Activated CD4-positive, alpha-beta memory T cell treated with anti-CD3 and anti-CD28 coated beads for 36 hours (primary cell): ENCODE measurements at regions of chr1 and their contacts with region 1.

Region 1: DNA sequence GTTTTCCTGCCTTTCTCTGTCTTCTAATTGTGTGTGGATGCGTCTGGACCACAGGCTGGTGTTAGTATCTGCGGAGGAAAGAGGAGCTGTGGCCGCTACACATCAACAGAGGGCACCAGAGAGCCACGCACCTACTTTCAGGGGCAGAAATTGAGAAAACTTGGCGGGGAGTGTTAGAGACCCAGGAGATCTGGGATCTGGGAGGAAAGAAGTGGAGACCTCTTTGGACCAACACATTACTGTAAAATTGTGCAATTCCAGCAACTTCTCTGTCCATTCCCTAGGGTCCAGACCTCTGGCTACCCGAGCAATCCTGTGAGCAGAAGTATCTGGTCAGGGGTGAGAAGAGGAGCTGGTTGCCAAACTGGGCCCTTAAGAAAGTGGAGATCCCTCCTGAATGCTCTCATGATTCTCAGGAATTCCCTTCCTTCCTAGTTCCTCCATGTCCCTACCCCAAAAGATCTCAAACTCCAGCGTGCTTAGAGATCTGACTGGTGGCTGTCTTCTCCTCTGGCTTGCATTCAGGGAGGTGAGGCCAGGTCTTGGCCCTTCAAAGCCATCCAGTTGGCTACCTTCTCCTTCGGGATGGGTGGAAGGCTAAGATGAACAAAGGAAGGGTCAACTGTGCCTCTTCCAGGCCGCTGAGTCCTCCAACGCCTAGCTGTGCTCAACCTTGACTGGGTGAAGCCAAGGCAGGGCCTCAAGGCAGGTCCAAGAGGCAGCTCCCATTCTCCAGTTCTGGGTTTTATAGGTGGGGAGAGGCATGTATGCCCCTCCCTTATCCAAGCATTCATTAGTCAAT is 1.2 kb upstream of the KIRREL1 start:
- DNase-seq: peak; percentile 59
- H3K4me3 Mint-ChIP-seq: no peak overlapping the region
- H3K27ac Mint-ChIP-seq: no peak overlapping the region
- H3K4me1 Mint-ChIP-seq: peaks cover 2% of the 10 kb centered on the region
- H3K27me3 Mint-ChIP-seq: peaks cover 37% of the 10 kb centered on the region

Region 2: DNA sequence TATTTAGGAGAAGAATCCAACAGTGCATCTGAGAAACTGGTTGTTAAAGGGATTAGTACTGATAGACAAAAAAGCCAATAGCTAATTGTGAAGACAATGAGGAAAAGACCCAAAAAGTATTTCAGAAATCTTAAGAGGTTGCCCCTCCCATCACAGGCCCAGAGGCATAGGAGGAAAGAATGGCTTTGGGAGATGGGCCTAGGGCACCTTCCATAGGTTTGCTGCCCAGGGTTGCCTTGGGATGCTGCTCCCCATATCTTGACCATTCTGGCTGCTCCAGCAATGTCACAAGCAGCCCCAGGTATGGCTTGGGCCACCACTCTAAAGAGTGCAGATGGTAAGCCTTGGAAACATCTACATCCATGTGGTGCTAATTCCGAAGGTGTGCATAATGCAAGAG is 82.0 kb before region 1 on chr1:
- CTCF ChIA-PET with region 1: no interaction called
- POLR2A ChIA-PET with region 1: no interaction called
- intact Hi-C with region 1: no loop called
- DNase-seq: no peak
- H3K4me3 Mint-ChIP-seq: no peak overlapping the region
- H3K27ac Mint-ChIP-seq: no peak overlapping the region
- H3K4me1 Mint-ChIP-seq: no peaks in the 10 kb centered on the region
- H3K27me3 Mint-ChIP-seq: peaks cover 5% of the 10 kb centered on the region

Region 3: GRCh38 chr1:157963713-157964112 is 28.5 kb before region 1 on chr1:
- CTCF ChIA-PET with region 1: interaction called, 15 read pairs
- POLR2A ChIA-PET with region 1: no interaction called
- intact Hi-C with region 1: no loop called
- DNase-seq: peak; percentile 69
- H3K4me3 Mint-ChIP-seq: no peak overlapping the region
- H3K27ac Mint-ChIP-seq: no peak overlapping the region
- H3K4me1 Mint-ChIP-seq: peaks cover 5% of the 10 kb centered on the region
- H3K27me3 Mint-ChIP-seq: peaks cover 11% of the 10 kb centered on the region

Region 4: GRCh38 chr1:158035976-158036583 is 43.8 kb after region 1 on chr1:
- CTCF ChIA-PET with region 1: interaction called, 20 read pairs
- POLR2A ChIA-PET with region 1: no interaction called
- intact Hi-C with region 1: loop called (anchors 1 kb)
- DNase-seq: no peak
- H3K4me3 Mint-ChIP-seq: no peak overlapping the region
- H3K27ac Mint-ChIP-seq: no peak overlapping the region
- H3K4me1 Mint-ChIP-seq: no peaks in the 10 kb centered on the region
- H3K27me3 Mint-ChIP-seq: peaks cover 10% of the 10 kb centered on the region

Region 5: GRCh38 chr1:158087320-158087927 is 95.2 kb after region 1 on chr1:
- CTCF ChIA-PET with region 1: interaction called, 6 read pairs
- POLR2A ChIA-PET with region 1: no interaction called
- intact Hi-C with region 1: loop called (anchors 2 kb)
- DNase-seq: peak; percentile 41
- H3K4me3 Mint-ChIP-seq: no peak overlapping the region
- H3K27ac Mint-ChIP-seq: no peak overlapping the region
- H3K4me1 Mint-ChIP-seq: no peaks in the 10 kb centered on the region
- H3K27me3 Mint-ChIP-seq: no peaks in the 10 kb centered on the region

Region 6: GRCh38 chr1:158117854-158118704 is 125.8 kb after region 1 on chr1:
- CTCF ChIA-PET with region 1: interaction called, 112 read pairs
- POLR2A ChIA-PET with region 1: no interaction called
- intact Hi-C with region 1: no loop called
- DNase-seq: peak; percentile 28
- H3K4me3 Mint-ChIP-seq: no peak overlapping the region
- H3K27ac Mint-ChIP-seq: no peak overlapping the region
- H3K4me1 Mint-ChIP-seq: peaks cover 8% of the 10 kb centered on the region
- H3K27me3 Mint-ChIP-seq: peaks cover 50% of the 10 kb centered on the region